ENCODE measurements at regions of chr17 and their contacts with region 1.

Region 1: GRCh38 chr17:80761110-80761871 is 216.7 kb downstream of the RPTOR start:
- DNase-seq: peak; percentile 86
- ATAC-seq: peak; percentile 82
- H3K4me3 Mint-ChIP-seq: peak overlapping the region; percentile 60
- H3K27ac Mint-ChIP-seq: peak overlapping the region; percentile 98
- H3K4me1 Mint-ChIP-seq: peaks cover 77% of the 10 kb centered on the region
- H3K27me3 Mint-ChIP-seq: no peaks in the 10 kb centered on the region

Region 2: DNA sequence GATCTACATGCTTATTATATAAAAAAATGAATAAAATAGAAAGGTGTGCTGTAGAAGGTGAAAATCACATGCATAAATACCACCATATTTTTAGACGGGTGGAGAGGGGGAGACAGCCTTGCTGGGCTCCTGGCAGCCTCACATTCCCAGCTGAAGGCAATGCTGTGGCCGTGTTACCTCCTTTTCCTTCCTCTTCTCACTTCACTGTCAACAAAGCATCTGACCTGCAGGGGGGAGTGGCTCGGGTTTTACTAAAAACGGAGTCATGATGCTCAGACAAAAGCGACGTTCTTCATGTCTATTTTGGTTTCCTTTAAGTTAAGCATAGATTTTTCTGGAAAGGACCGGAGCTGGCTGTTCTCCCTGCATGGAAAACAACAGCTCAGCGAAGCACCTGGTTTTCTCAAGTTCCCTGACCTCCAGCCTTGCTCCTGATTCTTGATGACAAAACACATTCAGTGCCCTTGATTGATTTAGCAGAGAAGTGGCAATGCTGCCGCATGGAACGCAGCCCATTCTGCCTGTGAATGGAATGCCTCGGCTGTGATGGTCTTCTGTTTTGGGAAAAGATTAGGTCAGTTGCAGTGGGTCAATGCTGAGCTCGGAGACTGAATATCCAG is 222.2 kb before region 1 on chr17:
- CTCF ChIA-PET with region 1: no interaction called
- POLR2A ChIA-PET with region 1: no interaction called
- intact Hi-C with region 1: no loop called
- DNase-seq: peak; percentile 23
- ATAC-seq: no peak
- H3K4me3 Mint-ChIP-seq: no peak overlapping the region
- H3K27ac Mint-ChIP-seq: no peak overlapping the region
- H3K4me1 Mint-ChIP-seq: peaks cover 6% of the 10 kb centered on the region
- H3K27me3 Mint-ChIP-seq: peaks cover 9% of the 10 kb centered on the region

Region 3: DNA sequence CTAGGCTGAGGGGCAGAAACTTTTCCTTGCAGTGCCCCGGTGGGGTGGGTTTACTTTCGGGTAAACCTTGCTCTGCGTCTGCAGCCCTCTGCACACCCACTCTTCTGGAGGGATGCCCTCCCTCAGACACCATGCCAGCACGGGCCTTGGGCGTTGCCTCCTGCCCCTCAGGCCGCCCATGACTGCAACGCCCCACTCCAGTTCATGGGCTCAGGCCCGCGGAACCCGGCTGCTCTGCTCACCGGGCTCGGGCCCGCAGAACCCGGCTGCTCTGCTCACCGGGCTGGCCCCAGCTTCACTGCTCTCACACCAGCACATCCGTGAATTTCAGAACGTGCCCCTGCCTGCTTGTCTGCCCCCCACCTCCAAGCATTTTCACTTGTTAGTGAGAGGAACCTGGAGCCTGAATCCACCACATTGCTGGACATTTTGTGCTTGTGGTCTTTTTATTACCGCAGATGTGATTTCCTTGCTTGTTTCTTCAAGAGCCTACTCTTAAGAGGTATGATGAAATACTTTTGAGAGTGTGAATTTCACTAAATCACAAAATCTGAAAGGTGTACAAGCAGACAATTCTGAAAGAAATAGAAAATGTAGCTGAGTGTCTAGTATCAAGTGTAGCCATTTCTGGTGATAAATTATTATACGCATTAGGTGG is 85.7 kb before region 1 on chr17:
- CTCF ChIA-PET with region 1: no interaction called
- POLR2A ChIA-PET with region 1: no interaction called
- intact Hi-C with region 1: loop called in 1 of 2 experiments (anchors 5 kb)
- DNase-seq: no peak
- ATAC-seq: no peak
- H3K4me3 Mint-ChIP-seq: no peak overlapping the region
- H3K27ac Mint-ChIP-seq: peak overlapping the region; percentile 79
- H3K4me1 Mint-ChIP-seq: peaks cover 74% of the 10 kb centered on the region
- H3K27me3 Mint-ChIP-seq: no peaks in the 10 kb centered on the region

Region 4: GRCh38 chr17:80780381-80781198 is 19.3 kb after region 1 on chr17:
- CTCF ChIA-PET with region 1: interaction called, 8 read pairs
- POLR2A ChIA-PET with region 1: interaction called, 5 read pairs
- intact Hi-C with region 1: loop called (anchors 1 to 2 kb)
- DNase-seq: peak; percentile 60
- ATAC-seq: peak; percentile 49
- H3K4me3 Mint-ChIP-seq: peak overlapping the region; percentile 29
- H3K27ac Mint-ChIP-seq: peak overlapping the region; percentile 95
- H3K4me1 Mint-ChIP-seq: peaks cover 80% of the 10 kb centered on the region
- H3K27me3 Mint-ChIP-seq: no peaks in the 10 kb centered on the region

Region 5: GRCh38 chr17:80832888-80833583 is 71.7 kb after region 1 on chr17:
- CTCF ChIA-PET with region 1: interaction called, 3 read pairs
- POLR2A ChIA-PET with region 1: interaction called, 3 read pairs
- intact Hi-C with region 1: loop called (anchors 1 to 2 kb)
- DNase-seq: peak; percentile 92
- ATAC-seq: peak; percentile 90
- H3K4me3 Mint-ChIP-seq: peak overlapping the region; percentile 70
- H3K27ac Mint-ChIP-seq: peak overlapping the region; percentile 95
- H3K4me1 Mint-ChIP-seq: peaks cover 44% of the 10 kb centered on the region
- H3K27me3 Mint-ChIP-seq: no peaks in the 10 kb centered on the region

Region 6: DNA sequence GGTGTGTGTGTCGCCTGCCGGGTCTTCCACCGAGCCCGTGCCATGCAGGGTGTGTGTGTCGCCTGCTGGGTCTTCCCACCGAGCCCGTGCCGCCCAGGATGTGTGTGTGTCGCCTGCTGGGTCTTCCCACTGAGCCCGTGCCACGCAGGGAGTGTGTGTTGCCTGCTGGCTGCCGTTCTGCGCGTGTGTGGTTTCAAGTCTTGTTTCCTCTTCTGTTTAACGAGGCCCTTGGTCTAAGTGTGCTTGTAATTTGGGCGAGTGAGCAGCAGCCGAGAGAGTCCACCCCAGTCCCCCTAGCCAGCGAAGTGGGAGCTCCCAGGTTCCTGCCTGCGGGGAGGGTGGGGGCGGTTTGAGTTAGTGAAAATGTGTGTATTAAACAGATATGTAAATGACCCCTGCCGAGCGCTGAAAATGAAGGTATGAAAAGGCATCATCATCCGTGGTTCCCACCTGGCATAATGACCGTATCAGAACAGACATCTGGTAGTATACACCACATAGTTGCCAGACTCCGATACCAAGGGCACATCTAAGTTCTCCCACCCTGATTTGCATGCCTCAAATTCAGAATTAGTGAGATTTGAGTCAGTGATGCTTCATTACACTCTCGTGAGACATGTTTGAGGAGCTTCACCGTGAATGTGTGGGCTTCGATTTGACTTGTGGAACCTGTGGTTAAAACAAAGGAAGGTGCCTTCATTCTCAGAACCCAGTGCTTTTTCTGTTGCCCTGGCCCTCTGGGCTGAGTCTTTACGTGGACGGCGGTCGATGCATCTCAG is 115.8 kb after region 1 on chr17:
- CTCF ChIA-PET with region 1: interaction called, 4 read pairs
- POLR2A ChIA-PET with region 1: interaction called, 4 read pairs
- intact Hi-C with region 1: loop called (anchors 1 to 5 kb)
- DNase-seq: peak; percentile 84
- ATAC-seq: peak; percentile 93
- H3K4me3 Mint-ChIP-seq: peak overlapping the region; percentile 51
- H3K27ac Mint-ChIP-seq: peak overlapping the region; percentile 99
- H3K4me1 Mint-ChIP-seq: peaks cover 68% of the 10 kb centered on the region
- H3K27me3 Mint-ChIP-seq: no peaks in the 10 kb centered on the region

Measured in activated CD4-positive, alpha-beta T cell treated with anti-CD3 and anti-CD28 coated beads for 36 hours (primary cell).